Motor neuron (in vitro differentiated cells): ENCODE measurements at regions of chr3 and their contacts with region 1.

Region 1: GRCh38 chr3:135918580-135918962 is 47.0 kb upstream of the PPP2R3A start:
- ATAC-seq: peak in 3 of 8 experiments; percentile 68 to 75 (median 72)
- H3K4me3 ChIP-seq: no peak overlapping the region
- H3K27ac ChIP-seq: no peak overlapping the region
- H3K4me1 ChIP-seq: no peaks in the 10 kb centered on the region

Region 2: GRCh38 chr3:136042608-136043221 is 124.1 kb after region 1 on chr3:
- in situ Hi-C with region 1: loop called in 5 of 9 experiments (anchors 10 to 25 kb)
- ATAC-seq: peak in 3 of 8 experiments; percentile 54 to 66 (median 62)
- H3K4me3 ChIP-seq: no peak overlapping the region
- H3K27ac ChIP-seq: no peak overlapping the region
- H3K4me1 ChIP-seq: no peaks in the 10 kb centered on the region